Activated CD4-positive, alpha-beta T cell treated with anti-CD3 and anti-CD28 coated beads, Interleukin-2, amount 10 ng/mL, durations not matched to agents 7 days and 5 days (primary cell): ENCODE measurements at regions of chr1 and their contacts with region 1.

Region 1: GRCh38 chr1:7962636-7963377 is 1.3 kb downstream of the PARK7 start:
- DNase-seq: no peak
- H3K4me3 Mint-ChIP-seq: peak overlapping the region; percentile 96
- H3K27ac Mint-ChIP-seq: peak overlapping the region; percentile 99
- H3K4me1 Mint-ChIP-seq: peaks cover 64% of the 10 kb centered on the region
- H3K27me3 Mint-ChIP-seq: no peaks in the 10 kb centered on the region

Region 2: DNA sequence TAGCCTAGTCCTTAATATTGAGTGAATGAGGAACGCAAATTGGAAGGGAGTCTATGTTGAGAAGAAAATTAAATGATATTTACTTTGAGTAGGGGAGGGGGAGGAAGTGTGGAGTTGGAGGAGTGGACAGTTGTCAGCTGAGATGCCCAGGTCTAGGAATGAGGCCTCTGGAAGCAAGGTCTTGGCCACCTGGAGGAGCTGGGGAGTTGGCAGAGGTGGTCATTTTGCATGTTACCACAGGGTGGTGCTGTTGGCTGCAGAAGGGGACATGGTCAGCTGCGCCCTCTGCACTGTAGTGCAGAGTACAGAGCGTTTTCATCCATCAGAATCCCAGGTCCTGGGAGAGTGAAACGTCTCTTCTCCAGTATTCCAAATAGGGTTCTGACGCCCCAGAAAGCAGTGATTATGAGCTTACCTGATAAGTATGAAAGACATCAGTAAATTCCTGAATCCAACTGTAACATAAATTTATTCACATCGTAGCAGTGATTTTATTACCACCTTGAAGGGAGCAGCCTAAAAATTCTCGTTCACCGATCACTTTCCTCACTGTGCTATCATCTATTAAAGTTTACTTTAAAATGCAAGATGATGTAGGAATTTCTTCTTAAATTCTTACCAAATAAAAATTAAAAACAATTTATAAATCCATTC is 12.5 kb after region 1 on chr1:
- CTCF ChIA-PET with region 1: interaction called, 13 read pairs
- POLR2A ChIA-PET with region 1: no interaction called
- DNase-seq: peak; percentile 19
- H3K4me3 Mint-ChIP-seq: no peak overlapping the region
- H3K27ac Mint-ChIP-seq: no peak overlapping the region
- H3K4me1 Mint-ChIP-seq: peaks cover 3% of the 10 kb centered on the region
- H3K27me3 Mint-ChIP-seq: no peaks in the 10 kb centered on the region